ENCODE measurements at regions of chr11 and their contacts with region 1.

Region 1: DNA sequence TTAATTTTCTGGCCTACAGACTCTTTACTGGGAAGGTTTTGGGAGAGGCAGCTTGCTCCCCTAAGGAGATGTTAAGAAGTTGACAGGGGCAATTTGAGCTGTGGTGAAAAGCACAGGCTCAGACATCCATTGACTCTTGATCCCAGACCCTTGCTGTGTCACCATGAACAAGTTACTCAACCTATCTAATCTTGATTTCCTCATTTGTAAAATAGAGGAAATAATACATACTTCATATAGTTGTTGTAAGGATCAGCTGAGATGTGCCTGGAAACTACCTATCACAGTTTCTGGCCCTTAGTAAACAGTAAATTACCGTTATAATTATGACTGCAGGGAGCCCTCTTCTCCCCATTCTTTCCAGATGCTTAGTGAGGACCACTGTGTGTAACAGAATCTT is 16.6 kb upstream of the SCGB1D4 start:
- DNase-seq: no peak
- H3K4me3 ChIP-seq: no peak overlapping the region
- H3K27ac ChIP-seq: no peak overlapping the region
- H3K4me1 ChIP-seq: no peaks in the 10 kb centered on the region
- H3K27me3 ChIP-seq: peaks cover 49% of the 10 kb centered on the region
- CTCF ChIP-seq: no peak
- EP300 ChIP-seq: no peak
- RAD21 ChIP-seq: no peak

Region 2: DNA sequence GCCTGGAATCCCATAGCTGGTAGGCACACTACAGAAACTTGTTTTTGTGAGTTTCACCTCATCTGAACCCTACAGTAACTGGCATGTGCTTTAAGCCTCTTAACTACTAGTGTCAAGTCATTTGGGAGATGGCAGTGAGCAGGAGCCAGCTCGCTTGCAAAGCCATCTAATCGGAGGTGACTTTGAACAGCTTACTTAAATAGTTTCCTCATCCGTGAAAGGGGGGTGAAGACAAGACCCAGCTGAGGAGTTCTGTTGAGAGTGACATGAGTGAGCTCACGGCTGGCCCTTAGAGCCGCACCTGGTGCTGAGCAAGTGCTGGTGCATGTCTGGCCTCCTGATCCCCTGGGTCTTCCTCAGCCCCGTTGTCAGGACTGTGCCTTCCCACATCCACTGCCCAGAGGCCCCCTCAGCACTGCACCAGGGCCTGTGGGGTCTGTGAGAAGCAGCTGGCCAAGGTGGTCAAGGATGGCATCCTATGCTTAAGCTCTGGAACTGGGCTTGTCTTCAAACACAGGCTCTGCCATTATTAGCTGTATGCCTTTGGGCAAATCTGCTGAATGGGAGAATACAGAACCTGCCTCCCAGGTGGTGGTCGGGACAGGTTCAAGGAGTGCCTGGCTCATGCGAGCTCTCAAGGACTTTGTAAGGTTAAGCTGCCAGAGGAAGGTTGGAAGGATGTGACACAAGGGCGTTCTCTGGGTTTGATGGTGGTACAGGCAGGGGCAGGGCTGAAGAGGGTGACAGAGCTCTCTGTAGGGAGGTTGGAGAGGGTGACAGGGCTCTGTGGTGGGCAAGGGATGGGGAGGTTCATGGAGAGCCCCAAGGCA is 164.3 kb before region 1 on chr11:
- CTCF ChIA-PET with region 1: interaction called, 10 read pairs
- POLR2A ChIA-PET with region 1: no interaction called
- DNase-seq: no peak
- H3K4me3 ChIP-seq: no peak overlapping the region
- H3K27ac ChIP-seq: no peak overlapping the region
- H3K4me1 ChIP-seq: no peaks in the 10 kb centered on the region
- H3K27me3 ChIP-seq: no peaks in the 10 kb centered on the region
- CTCF ChIP-seq: no peak
- EP300 ChIP-seq: no peak
- RAD21 ChIP-seq: no peak

Region 3: DNA sequence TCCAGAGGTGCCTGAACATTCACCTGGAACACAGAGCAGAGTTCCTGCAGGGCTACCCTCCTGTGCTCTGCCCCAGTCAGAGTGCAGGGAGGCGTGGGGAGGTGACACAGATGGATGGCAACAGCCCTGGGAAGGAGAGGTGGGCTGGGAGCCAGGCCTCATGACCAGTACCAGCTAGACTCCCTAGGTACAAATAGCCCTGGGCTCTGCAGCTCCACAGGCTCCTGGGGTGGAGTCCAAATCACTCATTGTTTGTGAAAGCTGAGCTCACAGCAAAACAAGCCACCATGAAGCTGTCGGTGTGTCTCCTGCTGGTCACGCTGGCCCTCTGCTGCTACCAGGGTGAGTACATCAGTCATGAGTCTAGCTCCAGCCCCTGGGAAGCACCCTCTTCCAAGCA is 73.4 kb before region 1 on chr11 and contains the start of gene SCGB1D2:
- CTCF ChIA-PET with region 1: interaction called, 13 read pairs
- POLR2A ChIA-PET with region 1: no interaction called
- DNase-seq: peak; percentile 6
- H3K4me3 ChIP-seq: no peak within 1 kb of the TSS
- H3K27ac ChIP-seq: no peak within 1 kb of the TSS
- H3K4me1 ChIP-seq: no peaks in the 10 kb centered on the region; a peak in 1 of 4 replicates
- H3K27me3 ChIP-seq: no peaks in the 10 kb centered on the region; the same call in 1 of the 2 replicates
- CTCF ChIP-seq: no peak
- EP300 ChIP-seq: no peak
- RAD21 ChIP-seq: no peak
- polyA plus RNA-seq, gene SCGB1D2: not detected in 2 replicates

Region 4: DNA sequence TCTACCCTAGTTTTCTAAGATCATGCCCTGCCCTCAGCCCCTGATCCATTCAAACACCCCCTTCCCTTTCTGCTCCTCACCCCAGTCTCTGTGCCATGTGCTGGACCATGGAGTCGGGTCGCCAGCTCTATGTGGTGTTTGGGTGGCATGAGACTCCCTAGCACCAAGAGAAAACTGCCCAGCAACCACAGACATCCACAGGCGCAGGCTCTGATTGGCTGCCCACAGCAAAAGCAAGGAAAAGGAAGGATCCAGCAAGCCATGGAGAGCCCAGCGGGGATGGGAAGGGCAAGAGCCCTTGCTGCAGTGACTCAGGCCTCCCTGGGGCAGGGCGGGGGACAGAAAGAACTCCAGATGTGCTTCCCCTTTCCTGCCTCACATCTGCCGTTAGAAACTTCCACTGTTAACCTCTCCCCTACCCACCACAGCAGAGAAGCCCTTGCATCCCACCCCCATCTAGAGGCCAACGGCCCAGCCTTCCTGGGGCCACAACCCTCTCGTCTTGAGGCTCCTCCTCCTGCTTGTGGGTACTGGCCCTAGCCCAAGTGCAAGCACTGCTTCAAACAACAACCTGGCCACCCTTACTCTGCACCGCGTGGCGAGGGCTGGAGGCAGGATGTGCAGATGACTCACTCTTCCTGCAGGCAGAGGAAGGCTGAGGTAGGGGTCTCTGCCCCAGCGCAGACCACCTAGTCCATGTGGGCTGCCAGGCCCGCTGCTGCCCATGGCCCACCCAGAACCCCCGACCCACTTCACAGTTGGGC is 240.9 kb after region 1 on chr11:
- CTCF ChIA-PET with region 1: no interaction called
- POLR2A ChIA-PET with region 1: no interaction called
- DNase-seq: peak; percentile 90
- H3K4me3 ChIP-seq: no peak overlapping the region; a peak in 1 of 4 replicates
- H3K27ac ChIP-seq: peak overlapping the region; percentile 85 to 97
- H3K4me1 ChIP-seq: peaks cover 40 to 79% of the 10 kb centered on the region in 2 experiments
- H3K27me3 ChIP-seq: no peaks in the 10 kb centered on the region
- CTCF ChIP-seq: no peak
- EP300 ChIP-seq: peak in 1 of 2 experiments; percentile 42; a peak in 1 of 4 replicates
- RAD21 ChIP-seq: no peak